Mammary epithelial cell (primary cell): ENCODE measurements at regions of chr19 and their contacts with region 1.

Region 1: DNA sequence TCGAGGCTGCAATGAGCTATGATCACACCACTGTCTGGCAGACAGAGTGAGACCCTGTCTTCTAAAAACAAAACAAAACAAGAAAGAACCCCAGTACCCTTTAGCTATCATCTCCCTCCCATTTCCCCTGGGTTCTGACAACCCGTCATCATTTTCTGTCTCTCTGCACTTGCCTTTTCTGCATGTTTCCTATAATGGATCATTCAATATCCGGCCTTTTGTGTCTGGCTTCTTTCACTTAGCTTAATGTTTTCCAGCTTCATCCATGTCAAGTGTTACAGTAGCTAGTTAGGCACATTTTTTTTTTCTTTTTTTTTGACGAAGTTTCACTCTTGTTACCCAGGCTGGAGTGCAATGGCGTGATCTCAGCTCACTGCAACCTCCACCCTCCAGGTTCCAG is 16.5 kb downstream of the AP2S1 start:
- DNase-seq: no peak
- H3K4me3 ChIP-seq: no peak overlapping the region
- H3K27ac ChIP-seq: no peak overlapping the region
- H3K4me1 ChIP-seq: peaks cover 6% of the 10 kb centered on the region
- H3K27me3 ChIP-seq: no peaks in the 10 kb centered on the region
- CTCF ChIP-seq: no peak

Region 2: GRCh38 chr19:46766569-46767317 is 67.4 kb before region 1 on chr19:
- CTCF ChIA-PET with region 1: interaction called, 11 read pairs
- dilution Hi-C with region 1: no loop called
- in situ Hi-C with region 1: no loop called
- intact Hi-C with region 1: no loop called
- DNase-seq: no peak
- H3K4me3 ChIP-seq: no peak overlapping the region
- H3K27ac ChIP-seq: no peak overlapping the region
- H3K4me1 ChIP-seq: peaks cover 9% of the 10 kb centered on the region
- H3K27me3 ChIP-seq: no peaks in the 10 kb centered on the region
- CTCF ChIP-seq: peak; percentile 65 to 85